H1 (cell line): ENCODE measurements at regions of chr10 and their contacts with region 1.

Region 1: DNA sequence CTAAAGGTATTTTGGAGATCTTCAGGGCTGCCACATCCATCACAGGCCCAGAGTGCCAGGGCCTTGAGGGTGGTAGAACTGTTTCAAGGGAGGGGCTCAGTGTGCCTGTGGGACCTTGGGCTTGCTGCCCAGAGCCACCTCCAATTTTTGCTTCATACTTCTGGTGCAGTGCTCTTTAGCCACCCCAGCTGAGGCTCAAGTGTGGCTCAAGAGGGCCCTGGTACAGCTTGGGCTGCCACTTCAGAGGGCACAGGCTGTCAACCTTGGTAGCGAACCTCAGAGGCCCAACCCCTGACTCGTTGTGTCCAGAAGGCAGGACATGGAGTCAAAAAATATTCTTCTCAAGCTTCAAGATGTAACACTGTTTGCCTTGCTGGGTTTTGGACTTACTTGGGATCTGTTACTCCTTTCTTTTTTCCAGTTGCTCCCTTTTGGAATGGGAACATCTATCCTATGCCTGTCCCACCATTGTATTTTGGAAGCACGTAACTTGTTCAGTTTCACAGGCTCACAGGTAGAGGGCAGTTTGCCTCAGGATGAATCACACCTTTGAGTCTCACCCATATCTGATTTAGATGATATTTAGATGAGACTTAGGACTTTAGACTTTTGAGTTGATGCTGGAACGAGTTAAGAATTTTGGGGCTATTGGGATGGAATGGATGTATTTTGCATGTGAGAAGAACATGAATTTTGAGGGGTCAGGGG is 224.8 kb downstream of the RPS24 start:
- DNase-seq: no peak
- H3K4me3 ChIP-seq: no peak overlapping the region
- H3K27ac ChIP-seq: no peak overlapping the region
- H3K4me1 ChIP-seq: 0 out of 7 replicates have a peak, but pooled peaks cover 0 to 2% (median 0%) of the 10 kb centered on the region in 4 experiments
- H3K27me3 ChIP-seq: no peaks in the 10 kb centered on the region
- CTCF ChIP-seq: peak in 2 of 3 experiments; percentile 31 to 58; a peak in 3 of 4 replicates
- EP300 ChIP-seq: no peak
- POLR2A ChIP-seq: no peak
- RAD21 ChIP-seq: peak; percentile 57 to 60

Region 2: GRCh38 chr10:78185693-78186055 is 72.8 kb before region 1 on chr10:
- CTCF ChIA-PET with region 1: no interaction called
- POLR2A ChIA-PET with region 1: no interaction called
- DNase-seq: no peak
- H3K4me3 ChIP-seq: no peak overlapping the region
- H3K27ac ChIP-seq: no peak overlapping the region
- H3K4me1 ChIP-seq: no peaks in the 10 kb centered on the region
- H3K27me3 ChIP-seq: no peaks in the 10 kb centered on the region; a peak in 1 of 7 replicates
- CTCF ChIP-seq: no peak
- EP300 ChIP-seq: no peak
- POLR2A ChIP-seq: no peak
- RAD21 ChIP-seq: no peak

Region 3: DNA sequence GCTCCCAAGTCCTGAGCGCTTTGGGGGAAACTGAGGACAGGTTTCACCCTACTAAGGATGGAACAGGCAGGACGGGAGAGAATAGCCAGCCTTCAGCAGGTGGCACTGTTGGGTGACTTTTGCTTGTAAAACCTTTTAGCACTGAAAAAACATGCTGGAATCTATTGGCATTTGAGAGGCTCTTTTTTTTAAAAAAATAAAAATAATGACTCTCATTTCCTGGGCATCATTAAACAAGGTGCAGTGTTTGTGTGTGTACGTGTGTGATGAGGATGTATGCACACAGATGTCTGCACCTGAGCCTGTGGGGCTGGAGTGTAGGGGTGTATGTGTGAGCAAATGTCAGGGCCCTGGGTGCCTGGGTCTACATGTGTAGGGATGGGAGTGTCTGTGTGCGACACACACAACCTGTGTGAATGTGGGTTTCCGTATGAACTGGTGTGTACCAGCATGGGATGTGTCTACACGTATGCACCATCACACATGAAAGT is 46.9 kb before region 1 on chr10:
- CTCF ChIA-PET with region 1: interaction called, 17 read pairs
- POLR2A ChIA-PET with region 1: no interaction called
- DNase-seq: no peak
- H3K4me3 ChIP-seq: no peak overlapping the region
- H3K27ac ChIP-seq: no peak overlapping the region
- H3K4me1 ChIP-seq: no peaks in the 10 kb centered on the region; a peak in 1 of 7 replicates
- H3K27me3 ChIP-seq: no peaks in the 10 kb centered on the region
- CTCF ChIP-seq: peak; percentile 46 to 53 (median 47)
- EP300 ChIP-seq: no peak
- POLR2A ChIP-seq: no peak
- RAD21 ChIP-seq: peak; percentile 69 to 74

Region 4: DNA sequence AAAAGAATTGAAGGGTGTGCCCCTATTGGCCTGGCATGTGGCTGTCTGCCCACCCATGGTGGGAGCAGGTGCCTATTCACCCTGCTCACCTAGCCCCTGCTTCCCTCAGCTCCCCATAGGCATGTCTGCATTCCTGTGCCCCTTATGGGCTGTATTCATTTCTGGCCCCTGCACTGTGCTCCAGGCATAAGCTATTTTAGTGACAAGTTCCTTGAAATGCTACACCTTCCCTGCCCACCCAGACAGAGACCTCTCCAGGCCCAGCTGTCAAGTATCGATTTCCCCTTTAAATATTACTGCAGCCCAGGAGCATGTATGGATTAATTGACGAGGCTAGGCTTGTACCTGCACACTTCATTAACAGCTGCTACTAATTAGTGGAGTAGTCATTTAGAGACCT is 10.6 kb after region 1 on chr10:
- CTCF ChIA-PET with region 1: interaction called, 32 read pairs
- POLR2A ChIA-PET with region 1: no interaction called
- DNase-seq: no peak
- H3K4me3 ChIP-seq: no peak overlapping the region
- H3K27ac ChIP-seq: no peak overlapping the region
- H3K4me1 ChIP-seq: no peaks in the 10 kb centered on the region
- H3K27me3 ChIP-seq: no peaks in the 10 kb centered on the region
- CTCF ChIP-seq: no peak
- EP300 ChIP-seq: no peak
- POLR2A ChIP-seq: no peak
- RAD21 ChIP-seq: no peak

Region 5: GRCh38 chr10:78302989-78303854 is 44.7 kb after region 1 on chr10:
- CTCF ChIA-PET with region 1: interaction called, 27 read pairs
- POLR2A ChIA-PET with region 1: no interaction called
- DNase-seq: peak; percentile 77 to 97
- H3K4me3 ChIP-seq: peak overlapping the region; percentile 46 to 65 (median 53)
- H3K27ac ChIP-seq: peak overlapping the region; percentile 37; the same call in 1 of the 2 replicates
- H3K4me1 ChIP-seq: peaks cover 7 to 10% (median 7%) of the 10 kb centered on the region in 4 experiments
- H3K27me3 ChIP-seq: 0 out of 7 replicates have a peak, but pooled peaks cover 0 to 3% (median 0%) of the 10 kb centered on the region in 4 experiments
- CTCF ChIP-seq: peak; percentile 71 to 94 (median 79)
- EP300 ChIP-seq: no peak
- POLR2A ChIP-seq: peak; percentile 56 to 88
- RAD21 ChIP-seq: peak; percentile 65 to 74

Region 6: GRCh38 chr10:78335691-78336401 is 77.4 kb after region 1 on chr10:
- CTCF ChIA-PET with region 1: no interaction called
- POLR2A ChIA-PET with region 1: no interaction called
- DNase-seq: peak in 1 of 2 experiments; percentile 30
- H3K4me3 ChIP-seq: no peak overlapping the region
- H3K27ac ChIP-seq: no peak overlapping the region
- H3K4me1 ChIP-seq: peaks cover 0 to 3% (median 0%) of the 10 kb centered on the region in 4 experiments; a peak in 2 of 7 replicates
- H3K27me3 ChIP-seq: no peaks in the 10 kb centered on the region; a peak in 1 of 7 replicates
- CTCF ChIP-seq: no peak
- EP300 ChIP-seq: no peak
- POLR2A ChIP-seq: no peak
- RAD21 ChIP-seq: no peak

Region 7: GRCh38 chr10:78381107-78381506 is 122.6 kb after region 1 on chr10:
- CTCF ChIA-PET with region 1: interaction called, 12 read pairs
- POLR2A ChIA-PET with region 1: no interaction called
- DNase-seq: peak in 1 of 2 experiments; percentile 74
- H3K4me3 ChIP-seq: no peak overlapping the region
- H3K27ac ChIP-seq: no peak overlapping the region
- H3K4me1 ChIP-seq: peaks cover 0 to 7% (median 0%) of the 10 kb centered on the region in 4 experiments; a peak in 2 of 7 replicates
- H3K27me3 ChIP-seq: no peaks in the 10 kb centered on the region
- CTCF ChIP-seq: peak; percentile 62 to 76 (median 63)
- EP300 ChIP-seq: no peak
- POLR2A ChIP-seq: no peak
- RAD21 ChIP-seq: peak; percentile 62 to 75